ENCODE measurements at regions of chr4 and their contacts with region 1.

Region 1: DNA sequence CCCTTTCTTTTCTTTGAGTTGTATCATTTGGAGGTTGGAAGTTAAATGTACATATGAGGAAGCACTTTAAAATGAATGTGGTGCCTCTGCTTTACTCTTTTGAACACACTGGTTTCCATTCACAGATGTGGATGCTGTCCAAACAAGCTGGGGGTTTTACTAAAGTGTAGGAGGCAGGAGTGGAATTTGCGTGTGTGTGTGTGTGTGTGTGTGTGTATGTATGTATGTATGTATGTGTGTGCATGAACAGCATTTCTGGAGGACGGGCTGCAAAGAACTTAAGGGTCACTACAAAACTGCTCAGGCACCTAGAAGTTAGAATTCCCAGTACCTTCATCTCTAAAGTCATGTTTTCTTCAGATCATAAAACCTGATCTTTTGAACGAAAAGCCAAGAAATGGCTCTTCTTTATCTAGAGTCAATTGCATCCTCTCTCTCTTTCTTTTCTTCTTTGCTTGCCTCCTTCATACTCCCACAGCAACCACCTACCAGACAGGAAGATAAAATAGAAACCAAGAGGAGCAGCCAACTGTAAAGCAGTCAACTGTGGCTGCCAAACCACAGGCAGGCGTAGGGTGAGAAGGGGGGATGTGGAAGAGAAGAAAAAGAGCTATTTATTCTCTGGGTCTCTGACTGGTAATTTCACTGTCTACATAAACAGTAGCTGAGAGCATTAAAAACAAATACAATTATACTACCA is 177.0 kb upstream of the RASGEF1B start:
- DNase-seq: peak; percentile 60
- H3K4me3 Mint-ChIP-seq: no peak overlapping the region
- H3K27ac Mint-ChIP-seq: no peak overlapping the region
- H3K4me1 Mint-ChIP-seq: peaks cover 57% of the 10 kb centered on the region
- H3K27me3 Mint-ChIP-seq: no peaks in the 10 kb centered on the region

Region 2: GRCh38 chr4:81505004-81505598 is 143.6 kb before region 1 on chr4:
- CTCF ChIA-PET with region 1: no interaction called
- intact Hi-C with region 1: loop called (anchors 5 kb)
- DNase-seq: peak; percentile 86
- H3K4me3 Mint-ChIP-seq: peak overlapping the region; percentile 25
- H3K27ac Mint-ChIP-seq: peak overlapping the region; percentile 37
- H3K4me1 Mint-ChIP-seq: peaks cover 42% of the 10 kb centered on the region
- H3K27me3 Mint-ChIP-seq: no peaks in the 10 kb centered on the region

Region 3: GRCh38 chr4:81589262-81589661 is 59.5 kb before region 1 on chr4:
- CTCF ChIA-PET with region 1: no interaction called
- intact Hi-C with region 1: loop called (anchors 2 kb)
- DNase-seq: no peak
- H3K4me3 Mint-ChIP-seq: no peak overlapping the region
- H3K27ac Mint-ChIP-seq: no peak overlapping the region
- H3K4me1 Mint-ChIP-seq: peaks cover 19% of the 10 kb centered on the region
- H3K27me3 Mint-ChIP-seq: no peaks in the 10 kb centered on the region

Region 4: DNA sequence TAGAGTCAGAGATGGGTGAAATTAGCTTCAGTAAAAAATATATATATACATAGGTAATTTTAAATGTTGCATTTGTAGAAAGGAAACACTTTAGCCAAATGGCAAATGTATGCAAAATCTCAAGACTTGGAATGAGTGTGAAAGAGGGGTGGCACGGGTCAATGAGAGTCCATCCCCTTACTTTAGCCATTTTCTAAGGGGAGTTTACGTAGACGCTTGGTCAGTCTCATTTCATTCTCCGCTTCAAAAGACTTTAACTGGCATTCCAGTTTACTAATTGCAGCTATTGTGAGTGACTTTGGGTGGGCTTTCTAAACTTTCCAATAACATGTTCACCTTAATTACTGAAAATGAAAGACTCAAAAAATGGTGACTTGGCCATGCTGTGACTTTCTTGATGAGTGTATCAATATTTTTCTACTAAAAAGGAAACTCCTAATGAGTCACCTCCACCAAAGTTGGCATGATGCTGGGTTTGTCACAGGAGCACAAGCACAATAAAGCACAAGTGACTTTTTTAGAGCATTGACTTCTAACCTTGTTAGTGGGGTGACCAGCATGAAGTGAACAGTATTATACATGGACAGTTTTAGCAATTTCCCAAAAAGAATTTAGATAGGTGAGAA is 179.0 kb after region 1 on chr4:
- CTCF ChIA-PET with region 1: no interaction called
- intact Hi-C with region 1: loop called (anchors 2 kb)
- DNase-seq: peak; percentile 69
- H3K4me3 Mint-ChIP-seq: no peak overlapping the region
- H3K27ac Mint-ChIP-seq: no peak overlapping the region
- H3K4me1 Mint-ChIP-seq: peaks cover 13% of the 10 kb centered on the region
- H3K27me3 Mint-ChIP-seq: peaks cover 5% of the 10 kb centered on the region

Region 5: GRCh38 chr4:81919238-81919637 is 270.5 kb after region 1 on chr4:
- CTCF ChIA-PET with region 1: no interaction called
- intact Hi-C with region 1: no loop called
- DNase-seq: no peak
- H3K4me3 Mint-ChIP-seq: no peak overlapping the region
- H3K27ac Mint-ChIP-seq: no peak overlapping the region
- H3K4me1 Mint-ChIP-seq: peaks cover 6% of the 10 kb centered on the region
- H3K27me3 Mint-ChIP-seq: peaks cover 11% of the 10 kb centered on the region

Region 6: GRCh38 chr4:82235346-82235745 is 586.6 kb after region 1 on chr4:
- CTCF ChIA-PET with region 1: no interaction called
- intact Hi-C with region 1: no loop called
- DNase-seq: no peak
- H3K4me3 Mint-ChIP-seq: no peak overlapping the region
- H3K27ac Mint-ChIP-seq: no peak overlapping the region
- H3K4me1 Mint-ChIP-seq: no peaks in the 10 kb centered on the region
- H3K27me3 Mint-ChIP-seq: no peaks in the 10 kb centered on the region

Region 7: DNA sequence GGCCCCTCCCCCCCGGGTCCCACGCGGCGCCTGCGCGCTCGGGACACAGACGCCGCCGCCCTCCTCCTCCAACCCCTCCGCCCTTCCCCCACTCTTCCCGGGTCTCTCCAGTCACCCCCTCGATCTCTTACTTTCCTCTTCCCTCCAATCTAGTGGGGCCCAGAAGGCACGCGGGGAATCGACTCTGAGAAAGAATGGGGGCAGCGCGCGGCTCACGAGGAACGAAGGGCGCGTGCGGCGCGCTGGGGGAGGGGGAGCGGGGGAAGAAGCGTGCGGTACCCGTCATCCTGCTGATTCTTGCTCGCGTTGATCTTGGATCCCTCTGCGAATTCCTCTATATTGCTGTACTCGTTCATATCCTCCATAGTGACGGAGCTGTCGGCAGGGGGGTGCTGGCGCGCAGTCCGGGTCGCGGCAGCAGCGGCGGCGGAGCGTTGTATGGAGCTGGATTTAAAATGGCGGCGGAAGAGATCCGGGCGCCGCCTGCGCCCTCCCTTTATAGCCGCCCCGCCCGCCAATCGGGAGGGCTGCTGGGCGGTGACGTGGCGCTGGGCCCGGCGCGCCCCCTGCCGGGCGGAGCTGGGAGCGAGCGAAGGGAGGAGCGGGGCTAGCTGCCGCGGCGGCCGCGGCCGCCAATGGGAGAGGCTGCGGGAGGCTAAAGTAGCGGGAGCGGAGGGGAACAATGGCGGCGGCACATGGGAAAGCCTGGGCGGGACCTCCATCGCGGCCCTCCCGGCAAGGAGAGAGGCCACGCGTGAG is 780.4 kb after region 1 on chr4:
- CTCF ChIA-PET with region 1: no interaction called
- intact Hi-C with region 1: loop called (anchors 10 kb)
- DNase-seq: peak; percentile 92
- H3K4me3 Mint-ChIP-seq: peak overlapping the region; percentile 93
- H3K27ac Mint-ChIP-seq: peak overlapping the region; percentile 99
- H3K4me1 Mint-ChIP-seq: peaks cover 64% of the 10 kb centered on the region
- H3K27me3 Mint-ChIP-seq: no peaks in the 10 kb centered on the region